ENCODE measurements at regions of chr4 and their contacts with region 1.

Region 1: GRCh38 chr4:8158710-8159536 is at the start of gene ABLIM2:
- DNase-seq: peak; percentile 96 to 100 (median 100)
- ATAC-seq: peak; percentile 100
- H3K4me3 ChIP-seq: peak within 1 kb of the TSS; percentile 95
- H3K4me3 Mint-ChIP-seq: peak within 1 kb of the TSS; percentile 92 to 100 (median 97)
- H3K27ac ChIP-seq: peak within 1 kb of the TSS; percentile 77
- H3K27ac Mint-ChIP-seq: peak within 1 kb of the TSS; percentile 84 to 96 (median 91)
- H3K4me1 ChIP-seq: peaks cover 10 to 13% of the 10 kb centered on the region in 2 donors
- H3K4me1 Mint-ChIP-seq: peaks cover 7 to 25% (median 18%) of the 10 kb centered on the region in 7 donors
- H3K27me3 ChIP-seq: no peaks in the 10 kb centered on the region
- H3K27me3 Mint-ChIP-seq: peaks cover 0 to 31% (median 4%) of the 10 kb centered on the region in 5 donors
- total RNA-seq, gene ABLIM2: 0.22 to 4.9 (median 3.1) TPM

Region 2: DNA sequence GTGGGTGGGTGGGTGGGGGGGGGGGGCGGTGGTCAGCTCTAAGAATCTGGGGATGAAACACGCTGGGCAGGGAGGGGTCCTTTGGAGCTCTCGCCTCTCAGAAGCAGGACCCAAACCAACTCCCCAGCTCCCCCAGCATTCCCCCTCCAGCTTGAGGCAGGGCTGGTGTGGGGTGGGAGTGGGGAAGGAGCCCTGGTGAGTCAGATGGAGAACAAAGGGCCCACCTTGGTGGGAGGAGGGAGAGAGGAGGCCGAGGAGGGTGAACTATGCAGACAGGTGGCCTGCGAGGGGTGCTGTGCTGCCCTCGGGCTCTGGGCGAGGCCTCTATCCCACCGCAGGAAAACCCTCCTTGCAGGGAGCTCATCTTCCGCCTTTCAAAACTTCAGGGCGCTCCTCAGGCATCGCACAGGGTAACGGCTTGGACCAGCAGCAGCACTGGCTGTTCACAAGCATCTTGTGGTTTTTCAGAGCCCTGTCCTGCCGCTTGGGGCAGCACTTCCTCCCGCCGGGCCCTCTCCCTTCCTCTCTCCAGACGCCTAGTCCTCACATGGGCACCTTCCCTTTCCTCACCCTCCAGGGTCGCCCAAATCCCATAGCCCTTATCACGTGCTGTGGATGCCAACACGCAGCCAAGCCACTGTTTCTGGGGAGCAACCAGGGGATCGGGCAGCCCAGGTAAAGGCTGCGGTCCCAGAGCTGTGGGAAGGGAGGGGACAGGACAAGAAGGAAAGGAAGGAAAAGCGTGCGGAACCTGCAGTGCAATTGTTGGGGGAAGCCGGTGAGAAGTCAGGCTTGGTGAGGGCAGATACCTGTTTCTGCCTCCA is 1057.0 kb before region 1 on chr4:
- CTCF ChIA-PET with region 1: no interaction called
- POLR2A ChIA-PET with region 1: no interaction called
- intact Hi-C with region 1: loop called (anchors 5 kb)
- DNase-seq: peak; percentile 15 to 59 (median 30)
- ATAC-seq: peak; percentile 67
- H3K4me3 ChIP-seq: peak overlapping the region; percentile 78
- H3K4me3 Mint-ChIP-seq: peak overlapping the region; percentile 89 to 95 (median 92)
- H3K27ac ChIP-seq: no peak overlapping the region
- H3K27ac Mint-ChIP-seq: peak overlapping the region in 6 of 9 donors; percentile 59 to 83 (median 72)
- H3K4me1 ChIP-seq: peaks cover 12 to 15% of the 10 kb centered on the region in 2 donors
- H3K4me1 Mint-ChIP-seq: peaks cover 9 to 30% (median 17%) of the 10 kb centered on the region in 7 donors
- H3K27me3 ChIP-seq: no peaks in the 10 kb centered on the region
- H3K27me3 Mint-ChIP-seq: peaks cover 0 to 36% (median 0%) of the 10 kb centered on the region in 5 donors

Region 3: DNA sequence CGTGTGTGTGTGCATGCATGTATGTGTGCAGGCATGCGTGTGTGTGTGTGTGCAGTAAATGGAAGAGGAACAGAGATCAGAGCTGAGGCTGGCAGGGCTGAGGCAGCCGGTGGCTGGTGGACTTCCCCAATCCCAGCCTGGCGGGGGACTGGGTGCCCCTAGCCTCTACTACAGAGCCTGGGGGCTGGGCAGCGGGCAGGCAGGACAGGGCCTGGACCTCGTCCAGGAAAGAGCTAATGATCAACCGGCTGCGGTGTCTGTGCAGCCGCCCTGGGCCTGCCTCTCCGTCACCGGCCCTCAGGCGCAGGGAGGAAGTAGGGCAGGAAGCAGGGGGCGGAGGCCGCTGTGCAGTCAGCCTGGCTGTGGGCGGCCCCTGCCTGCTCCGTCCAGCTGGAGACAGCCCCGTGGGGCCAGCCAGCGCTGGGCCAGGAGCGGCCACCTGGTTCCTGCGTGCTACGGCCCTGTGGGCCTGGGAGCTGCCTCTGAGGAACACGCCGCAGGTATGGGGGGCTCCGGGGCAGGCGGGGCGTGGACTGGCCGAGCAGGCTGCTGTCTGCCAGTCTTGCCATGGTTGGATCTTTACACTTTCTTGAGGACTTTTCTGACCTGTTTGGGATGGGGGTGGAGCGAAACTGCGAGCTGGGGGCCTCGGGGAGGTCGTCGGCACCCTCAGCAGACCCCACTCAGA is 40.1 kb after region 1 on chr4 and contains the start of gene SH3TC1:
- CTCF ChIA-PET with region 1: interaction called, 4 read pairs
- POLR2A ChIA-PET with region 1: interaction called, 11 read pairs
- intact Hi-C with region 1: loop called (anchors 1 kb)
- DNase-seq: peak; percentile 39 to 78 (median 57)
- ATAC-seq: peak; percentile 84
- H3K4me3 ChIP-seq: peak within 1 kb of the TSS; percentile 91
- H3K4me3 Mint-ChIP-seq: peak within 1 kb of the TSS; percentile 89 to 98 (median 96)
- H3K27ac ChIP-seq: peak within 1 kb of the TSS; percentile 84
- H3K27ac Mint-ChIP-seq: peak within 1 kb of the TSS; percentile 90 to 99 (median 96)
- H3K4me1 ChIP-seq: peaks cover 22 to 27% of the 10 kb centered on the region in 2 donors
- H3K4me1 Mint-ChIP-seq: peaks cover 29 to 43% (median 42%) of the 10 kb centered on the region in 7 donors
- H3K27me3 ChIP-seq: no peaks in the 10 kb centered on the region
- H3K27me3 Mint-ChIP-seq: peaks cover 0 to 3% (median 0%) of the 10 kb centered on the region in 5 donors
- total RNA-seq, gene SH3TC1: 33.8 to 120 (median 41.2) TPM

Region 4: DNA sequence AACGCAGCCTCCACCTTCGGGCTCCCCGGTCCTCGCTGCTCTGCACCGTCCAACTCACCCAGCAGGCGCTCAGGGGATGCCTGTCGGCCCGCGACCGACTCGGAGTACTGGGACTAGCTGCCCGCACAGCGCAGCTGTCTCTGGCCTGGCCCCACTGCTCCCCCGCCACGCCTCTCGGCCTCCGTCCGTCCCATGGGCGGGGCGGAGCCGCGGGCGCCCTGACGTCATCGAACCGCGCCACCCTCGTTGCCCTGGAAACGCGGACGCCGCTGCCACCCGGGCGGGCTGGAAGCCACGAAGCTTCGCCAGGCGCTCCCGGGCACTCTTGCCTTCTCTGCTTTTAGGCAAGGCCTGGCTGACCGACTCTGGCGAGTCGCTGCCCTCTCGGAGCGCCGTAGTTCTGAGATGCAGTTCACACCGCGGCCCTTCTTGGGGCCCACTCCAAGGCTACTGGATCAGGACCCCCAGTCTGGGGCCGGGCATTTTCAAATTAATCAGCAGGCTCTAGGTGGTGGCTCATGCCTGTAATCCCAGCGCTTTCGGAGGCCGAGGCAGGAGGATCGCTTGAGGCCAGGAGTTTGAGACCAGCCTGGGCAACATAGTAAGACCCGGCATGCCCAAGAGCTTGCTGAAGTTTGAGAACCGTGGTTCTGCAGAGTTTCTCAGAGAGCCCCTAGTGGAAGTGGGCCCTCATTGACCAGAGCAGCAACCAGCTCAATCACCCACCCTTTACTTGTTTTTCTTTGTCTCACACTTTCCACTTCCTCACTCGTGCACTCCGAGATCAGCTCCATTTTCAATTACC is 269.6 kb after region 1 on chr4:
- CTCF ChIA-PET with region 1: no interaction called
- POLR2A ChIA-PET with region 1: no interaction called
- intact Hi-C with region 1: loop called (anchors 1 kb)
- DNase-seq: peak; percentile 81 to 99 (median 91)
- ATAC-seq: peak; percentile 99
- H3K4me3 ChIP-seq: peak overlapping the region; percentile 95
- H3K4me3 Mint-ChIP-seq: peak overlapping the region; percentile 85 to 98 (median 95)
- H3K27ac ChIP-seq: peak overlapping the region; percentile 84
- H3K27ac Mint-ChIP-seq: peak overlapping the region; percentile 69 to 94 (median 92)
- H3K4me1 ChIP-seq: peaks cover 13 to 17% of the 10 kb centered on the region in 2 donors
- H3K4me1 Mint-ChIP-seq: peaks cover 15 to 54% (median 48%) of the 10 kb centered on the region in 7 donors
- H3K27me3 ChIP-seq: no peaks in the 10 kb centered on the region
- H3K27me3 Mint-ChIP-seq: no peaks in the 10 kb centered on the region

Region 5: DNA sequence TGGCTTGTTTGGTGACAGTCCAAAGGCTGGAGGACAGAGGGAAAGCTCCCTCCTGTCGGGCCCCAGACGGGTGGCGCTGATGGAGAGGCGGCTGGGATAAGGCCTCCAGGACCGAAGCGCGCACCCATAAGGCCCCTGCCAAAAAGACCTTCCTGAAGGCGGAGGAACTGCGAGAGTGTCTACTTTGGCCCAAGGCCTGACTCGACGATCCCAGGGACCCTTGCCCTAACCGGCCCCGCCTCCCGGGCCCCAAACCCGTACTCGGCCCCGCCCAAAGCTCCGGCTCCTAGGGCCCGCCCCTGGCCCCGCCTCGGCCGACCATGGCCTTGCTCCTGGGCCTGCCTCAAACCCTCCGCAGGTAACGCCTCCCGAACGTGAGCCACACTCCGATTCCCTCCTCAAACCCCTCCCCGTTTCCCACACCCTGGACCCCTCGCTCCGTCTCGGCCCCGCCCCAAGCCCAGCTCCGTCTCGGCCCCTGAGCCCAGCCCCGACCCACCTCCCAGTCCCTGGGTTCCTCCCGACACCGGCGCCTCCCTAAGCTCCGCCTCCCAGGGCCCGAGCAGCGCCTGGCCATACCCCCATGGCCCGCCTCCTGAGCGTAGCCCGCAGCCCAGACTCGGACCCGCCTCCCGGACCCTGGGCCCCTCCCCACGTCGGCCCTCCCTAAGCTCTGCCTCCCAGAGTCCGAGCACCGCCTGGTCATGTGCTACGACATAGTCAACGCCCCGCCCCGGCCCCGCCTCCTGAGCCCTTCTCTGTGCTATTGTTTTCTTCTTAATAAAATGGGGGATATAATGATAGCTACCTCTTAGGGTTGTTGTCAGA is 1532.5 kb after region 1 on chr4:
- CTCF ChIA-PET with region 1: no interaction called
- POLR2A ChIA-PET with region 1: no interaction called
- intact Hi-C with region 1: loop called in 1 of 2 experiments (anchors 5 kb)
- DNase-seq: peak; percentile 80 to 88 (median 86)
- ATAC-seq: peak; percentile 100
- H3K4me3 ChIP-seq: peak overlapping the region; percentile 61
- H3K4me3 Mint-ChIP-seq: peak overlapping the region; percentile 65 to 92 (median 86)
- H3K27ac ChIP-seq: peak overlapping the region; percentile 77
- H3K27ac Mint-ChIP-seq: peak overlapping the region; percentile 79 to 91 (median 83)
- H3K4me1 ChIP-seq: no peaks in the 10 kb centered on the region
- H3K4me1 Mint-ChIP-seq: peaks cover 9 to 26% (median 24%) of the 10 kb centered on the region in 7 donors
- H3K27me3 ChIP-seq: no peaks in the 10 kb centered on the region
- H3K27me3 Mint-ChIP-seq: peaks cover 0 to 9% (median 0%) of the 10 kb centered on the region in 5 donors